GM18951 (cell line): ENCODE measurements at regions of chr9 and their contacts with region 1.

Region 1: GRCh38 chr9:10059044-10059443 is 553.8 kb downstream of the PTPRD start:
- POLR2A ChIP-seq: no peak

Region 2: DNA sequence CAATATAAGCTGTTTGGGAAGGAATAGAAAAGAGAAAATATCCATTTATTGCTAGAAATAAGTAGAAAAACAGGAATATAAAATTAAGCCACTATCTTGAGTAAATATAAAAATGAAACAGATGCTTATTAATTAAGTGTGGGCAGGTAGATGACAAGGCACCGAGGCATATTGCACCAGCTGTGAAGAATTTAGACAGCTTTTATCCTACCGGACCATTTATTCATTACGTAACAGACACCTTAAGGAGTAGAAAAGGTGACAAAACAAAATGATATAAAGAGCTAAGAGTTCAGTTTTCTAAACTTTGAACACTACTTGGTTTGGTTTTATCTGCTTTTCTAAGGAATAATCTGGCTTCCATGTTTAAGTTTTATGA is 149.6 kb after region 1 on chr9:
- in situ Hi-C with region 1: no loop called
- POLR2A ChIP-seq: no peak

Region 3: DNA sequence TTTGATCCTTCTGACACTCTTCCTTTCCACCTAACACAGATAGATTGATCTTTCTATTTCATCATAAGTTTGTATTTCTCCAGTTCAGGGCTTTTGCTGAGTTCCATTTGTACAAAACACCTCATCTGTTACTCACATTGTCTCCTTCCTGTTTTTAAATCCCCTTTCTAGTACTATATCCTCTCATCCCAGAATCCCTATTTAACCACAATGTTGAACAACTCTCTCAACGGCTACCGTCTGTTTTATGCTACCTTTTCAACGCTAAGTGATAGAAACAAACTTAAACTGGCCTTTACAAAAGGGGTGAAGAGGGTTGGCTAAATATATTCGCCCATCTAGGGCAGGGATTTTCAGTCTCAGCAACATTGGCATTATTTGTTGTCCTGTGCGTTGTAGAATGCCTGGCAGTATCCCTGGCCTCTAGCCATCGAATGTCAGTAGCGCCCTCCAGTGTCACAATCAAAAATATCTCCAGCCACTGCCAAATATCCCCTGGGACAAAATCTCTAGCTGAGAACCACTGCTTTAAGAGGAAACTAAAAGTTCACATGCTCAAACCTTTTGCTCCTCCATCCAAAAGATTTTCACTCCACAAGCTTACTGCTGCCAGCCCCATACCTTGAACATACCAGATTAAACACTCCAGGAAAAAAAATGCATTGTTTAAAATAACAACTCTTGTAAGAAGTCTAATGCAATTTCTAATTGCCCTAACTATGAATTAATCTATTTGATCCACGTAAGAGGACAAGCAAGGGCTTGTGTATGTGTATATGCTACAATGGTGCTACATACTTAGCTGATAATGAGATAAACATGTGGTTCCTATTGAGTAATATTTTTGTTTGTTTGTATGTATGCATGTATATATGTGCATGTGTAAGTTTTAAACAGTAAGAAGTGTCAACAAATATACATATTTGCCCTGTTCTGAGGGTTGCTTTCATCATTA is 209.8 kb after region 1 on chr9:
- in situ Hi-C with region 1: loop called (anchors 25 kb)
- POLR2A ChIP-seq: no peak

Region 4: DNA sequence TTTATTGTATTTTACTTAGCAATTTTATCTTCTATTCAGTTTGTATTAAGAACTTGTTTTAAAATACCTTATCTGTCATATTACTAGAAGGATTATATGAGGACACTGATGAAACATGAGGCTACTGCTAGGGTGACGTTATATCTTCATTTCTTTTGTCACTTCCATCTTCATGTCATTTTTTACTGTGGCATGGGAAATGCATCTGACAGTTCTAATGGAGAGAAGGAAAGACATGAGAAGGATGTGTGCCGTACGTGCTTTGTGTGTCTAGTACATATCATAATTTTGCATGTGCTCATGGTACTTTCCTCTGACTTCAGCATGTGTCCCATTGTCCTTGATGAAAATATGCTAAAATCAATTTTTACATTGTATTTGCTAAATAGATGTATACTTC is 295.5 kb after region 1 on chr9:
- in situ Hi-C with region 1: no loop called
- POLR2A ChIP-seq: no peak

Region 5: GRCh38 chr9:10534850-10535249 is 475.8 kb after region 1 on chr9:
- in situ Hi-C with region 1: no loop called
- POLR2A ChIP-seq: no peak